ENCODE measurements at regions of chr7 and their contacts with region 1.

Region 1: DNA sequence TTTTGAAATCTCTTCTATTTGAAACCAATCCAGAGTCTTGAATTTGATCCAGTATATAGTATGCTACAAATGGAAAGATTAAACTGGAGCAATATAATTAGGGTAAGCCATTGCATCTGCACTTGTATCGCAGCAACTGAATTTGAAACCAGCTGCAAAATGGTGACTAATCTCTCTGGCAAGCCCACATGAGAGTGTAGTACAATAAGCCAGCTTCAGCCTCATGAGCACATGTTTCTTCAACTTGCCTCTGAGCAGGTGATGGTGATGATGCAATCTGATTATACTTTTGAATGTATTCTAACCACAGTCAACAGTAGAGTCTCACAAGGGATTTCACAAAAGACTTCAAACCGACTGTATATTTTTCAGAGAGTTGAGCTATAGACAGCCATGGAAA is 829 bp upstream of the RPA3 start:
- DNase-seq: peak; percentile 96
- H3K4me3 Mint-ChIP-seq: peak overlapping the region; percentile 55
- H3K27ac Mint-ChIP-seq: peak overlapping the region; percentile 90
- H3K4me1 Mint-ChIP-seq: peaks cover 18% of the 10 kb centered on the region
- H3K27me3 Mint-ChIP-seq: no peaks in the 10 kb centered on the region
- CTCF ChIP-seq: no peak

Region 2: GRCh38 chr7:7705318-7705717 is 13.9 kb before region 1 on chr7:
- CTCF ChIA-PET with region 1: no interaction called
- POLR2A ChIA-PET with region 1: interaction called, 21 read pairs
- intact Hi-C with region 1: no loop called
- DNase-seq: no peak
- H3K4me3 Mint-ChIP-seq: no peak overlapping the region
- H3K27ac Mint-ChIP-seq: peak overlapping the region; percentile 43
- H3K4me1 Mint-ChIP-seq: peaks cover 21% of the 10 kb centered on the region
- H3K27me3 Mint-ChIP-seq: no peaks in the 10 kb centered on the region
- CTCF ChIP-seq: no peak

Region 3: DNA sequence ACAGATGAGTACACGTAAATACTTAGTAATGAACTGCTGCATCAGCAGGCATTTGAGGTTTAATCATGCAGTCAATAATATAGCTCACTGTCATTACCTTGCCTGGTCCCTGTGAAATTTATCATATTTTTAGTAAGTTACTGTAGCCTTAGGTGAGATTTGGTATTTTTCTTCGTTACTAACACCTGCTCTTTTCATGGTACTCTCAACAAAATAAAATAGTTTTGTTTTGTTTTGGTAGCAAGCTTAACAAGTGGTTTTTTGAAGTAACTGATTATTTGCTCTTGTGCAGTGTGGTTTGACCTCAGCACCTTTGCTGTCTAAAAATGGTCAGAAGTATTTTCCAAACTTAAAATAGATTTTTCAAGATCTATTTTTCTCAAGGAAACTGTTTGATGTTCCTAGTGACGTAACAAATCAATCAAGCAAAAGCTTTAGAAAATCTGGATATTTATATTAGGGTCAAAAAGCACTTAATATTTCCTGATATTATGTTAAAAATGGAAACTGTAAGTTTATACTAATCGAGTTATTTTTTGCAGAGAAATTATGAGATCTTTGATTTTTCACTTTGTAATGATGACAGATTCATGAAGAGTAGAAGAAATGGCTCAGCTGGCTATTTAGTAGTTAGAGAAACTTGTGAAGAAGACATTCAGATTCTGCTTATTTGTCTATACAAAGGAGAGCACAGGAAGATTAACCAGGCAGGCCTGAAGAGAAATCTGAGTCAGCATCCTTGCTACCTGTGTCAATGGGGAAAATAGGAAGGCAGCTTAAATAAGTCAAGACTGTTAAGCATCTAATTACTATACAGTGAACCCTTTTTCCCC is 20.2 kb after region 1 on chr7:
- CTCF ChIA-PET with region 1: interaction called, 4 read pairs
- POLR2A ChIA-PET with region 1: interaction called, 10 read pairs
- intact Hi-C with region 1: no loop called
- DNase-seq: no peak
- H3K4me3 Mint-ChIP-seq: no peak overlapping the region
- H3K27ac Mint-ChIP-seq: no peak overlapping the region
- H3K4me1 Mint-ChIP-seq: no peaks in the 10 kb centered on the region
- H3K27me3 Mint-ChIP-seq: no peaks in the 10 kb centered on the region
- CTCF ChIP-seq: no peak

Region 4: DNA sequence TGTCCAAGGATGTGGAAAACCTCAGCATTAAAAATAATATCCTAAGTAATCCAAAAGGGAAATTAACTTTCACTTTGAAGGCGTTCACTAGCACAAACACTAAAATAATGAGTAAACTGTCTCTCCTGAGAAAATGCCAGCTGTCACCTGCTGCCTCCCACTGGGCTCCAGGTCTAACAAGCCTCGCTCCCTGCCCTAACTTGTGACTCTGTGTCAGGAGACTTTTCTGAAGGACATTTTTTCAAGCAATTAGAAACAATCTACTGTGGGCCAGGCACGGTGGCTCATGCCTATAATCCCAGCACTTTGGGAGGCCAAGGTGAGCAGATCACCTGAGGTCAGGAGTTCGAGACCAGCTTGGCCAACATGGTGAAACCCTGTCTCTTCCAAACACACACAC is 176.5 kb after region 1 on chr7:
- CTCF ChIA-PET with region 1: no interaction called
- POLR2A ChIA-PET with region 1: no interaction called
- intact Hi-C with region 1: no loop called
- DNase-seq: no peak
- H3K4me3 Mint-ChIP-seq: no peak overlapping the region
- H3K27ac Mint-ChIP-seq: no peak overlapping the region
- H3K4me1 Mint-ChIP-seq: peaks cover 6% of the 10 kb centered on the region
- H3K27me3 Mint-ChIP-seq: no peaks in the 10 kb centered on the region
- CTCF ChIP-seq: no peak

Region 5: DNA sequence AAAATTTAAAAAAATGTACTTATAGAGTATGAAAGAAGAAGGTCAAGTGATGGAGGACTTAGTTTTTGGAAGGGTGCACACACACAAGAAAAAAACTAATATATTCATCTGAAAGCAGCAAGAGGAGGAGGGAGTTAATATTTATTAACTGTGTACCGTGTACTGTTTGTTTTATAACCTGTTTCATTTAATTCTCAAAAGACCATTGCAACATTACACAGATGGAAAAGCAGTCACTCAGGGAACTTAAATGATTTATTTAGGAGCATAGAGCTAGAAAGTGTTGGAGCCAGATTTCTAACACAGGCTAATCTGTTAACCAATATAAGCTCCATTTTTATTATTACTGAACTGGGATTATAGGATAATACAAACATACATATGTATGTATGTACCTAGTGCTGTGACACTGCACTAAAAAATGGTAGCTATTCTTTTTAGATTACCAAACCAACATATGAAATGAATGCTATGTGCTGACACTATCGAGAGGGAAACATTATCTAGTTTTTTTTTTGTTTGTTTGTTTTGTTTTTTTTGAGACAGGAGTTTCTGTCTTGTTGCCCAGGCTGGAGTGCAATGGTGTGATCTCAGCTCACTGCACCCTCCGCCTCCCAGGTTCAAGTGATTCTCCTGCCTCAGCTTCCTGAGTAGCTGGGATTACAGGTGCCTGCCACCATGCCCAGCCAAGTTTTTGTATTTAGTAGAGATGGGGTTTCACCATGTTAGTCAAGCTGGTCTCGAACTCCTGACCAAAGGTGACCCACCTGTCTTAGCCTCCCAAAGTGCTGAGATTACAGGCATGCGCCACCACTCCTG is 286.2 kb after region 1 on chr7:
- CTCF ChIA-PET with region 1: no interaction called
- POLR2A ChIA-PET with region 1: no interaction called
- intact Hi-C with region 1: no loop called
- DNase-seq: no peak
- H3K4me3 Mint-ChIP-seq: no peak overlapping the region
- H3K27ac Mint-ChIP-seq: no peak overlapping the region
- H3K4me1 Mint-ChIP-seq: no peaks in the 10 kb centered on the region
- H3K27me3 Mint-ChIP-seq: no peaks in the 10 kb centered on the region
- CTCF ChIP-seq: no peak